ENCODE measurements at regions of chr13 and their contacts with region 1.

Region 1: DNA sequence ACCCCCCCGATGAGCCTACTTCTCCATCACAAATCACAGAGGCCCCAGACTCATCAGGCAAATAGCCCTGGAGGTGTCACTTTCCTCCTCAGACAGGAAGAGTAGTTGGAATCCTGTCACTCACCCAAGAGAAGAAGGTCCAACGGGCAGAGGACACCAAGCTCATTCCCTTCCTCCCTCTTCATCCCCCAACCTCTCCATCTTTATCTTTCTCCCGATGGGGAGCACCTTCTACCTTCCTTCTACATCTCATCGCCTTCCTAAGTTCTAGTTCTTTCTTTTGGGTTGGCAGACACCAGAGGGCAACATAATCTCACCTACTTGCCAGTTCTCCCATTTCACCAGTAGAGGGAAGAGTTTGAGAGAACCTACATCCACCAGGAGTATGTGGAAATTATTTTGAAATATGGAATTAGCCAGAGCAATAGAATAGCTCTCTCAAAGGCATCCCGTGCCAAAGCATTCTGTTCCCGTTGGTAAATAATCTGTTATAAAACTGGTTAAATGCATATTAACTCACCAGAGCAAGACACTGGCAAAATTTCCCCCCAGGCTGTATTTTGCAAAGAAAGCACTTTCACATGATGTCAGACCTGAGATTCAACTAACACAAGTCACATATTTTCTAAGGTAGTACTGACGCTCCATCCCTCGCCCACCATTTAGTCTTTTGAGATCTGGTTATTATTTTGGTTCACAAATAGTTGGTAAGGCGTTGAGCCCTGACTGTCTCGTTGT is 55.0 kb downstream of the ZIC5 start:
- DNase-seq: peak in 2 of 6 donors; percentile 33 to 49
- ATAC-seq: peak; percentile 86 to 99 (median 98)
- H3K4me3 ChIP-seq: no peak overlapping the region
- H3K27ac ChIP-seq: no peak overlapping the region
- H3K4me1 ChIP-seq: no peaks in the 10 kb centered on the region
- H3K27me3 ChIP-seq: no peaks in the 10 kb centered on the region
- CTCF ChIP-seq: peak; percentile 72 to 83 (median 76)

Region 2: GRCh38 chr13:100235311-100235901 is 318.9 kb after region 1 on chr13:
- intact Hi-C with region 1: loop called in 2 of 3 experiments (anchors 5 to 10 kb)
- DNase-seq: peak in 1 of 6 donors; percentile 31
- ATAC-seq: peak; percentile 66 to 84 (median 82)
- H3K4me3 ChIP-seq: peak overlapping the region in 1 of 4 donors; percentile 10
- H3K27ac ChIP-seq: no peak overlapping the region
- H3K4me1 ChIP-seq: peaks cover 0 to 7% (median 4%) of the 10 kb centered on the region in 3 donors
- H3K27me3 ChIP-seq: no peaks in the 10 kb centered on the region
- CTCF ChIP-seq: peak in 3 of 4 donors; percentile 12 to 39 (median 39)

Region 3: DNA sequence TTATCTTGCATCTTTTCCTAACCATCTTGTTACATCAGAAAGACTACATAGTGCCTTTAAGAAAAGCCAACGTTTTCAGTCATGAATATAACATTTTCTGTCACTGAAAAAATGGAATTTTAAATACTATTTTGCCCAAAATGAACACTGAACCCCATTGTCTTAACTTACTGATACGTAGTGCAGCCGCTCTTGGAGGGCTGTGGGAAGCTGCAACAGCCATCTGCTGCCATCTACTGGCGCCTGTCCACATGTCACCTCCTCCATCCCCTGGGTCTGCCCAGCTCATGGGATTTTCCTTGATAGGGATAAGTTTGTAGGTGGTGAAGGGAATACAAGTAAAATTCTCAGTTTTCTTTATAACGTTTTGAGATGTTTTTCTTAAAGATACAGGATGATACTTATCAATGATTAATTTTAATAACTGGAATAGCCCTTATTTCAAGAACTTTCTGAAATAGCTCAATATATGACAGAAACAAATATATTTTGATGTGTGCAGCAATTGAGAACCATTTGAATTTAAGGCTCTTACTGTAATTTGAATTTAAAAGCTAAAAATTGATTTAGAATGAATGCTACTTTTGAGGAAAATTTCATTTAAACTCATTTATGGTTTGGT is 598.4 kb after region 1 on chr13:
- intact Hi-C with region 1: loop called in 2 of 3 experiments (anchors 10 kb)
- DNase-seq: peak; percentile 61 to 86 (median 79)
- ATAC-seq: peak; percentile 69 to 87 (median 82)
- H3K4me3 ChIP-seq: no peak overlapping the region
- H3K27ac ChIP-seq: no peak overlapping the region
- H3K4me1 ChIP-seq: peaks cover 6 to 26% (median 23%) of the 10 kb centered on the region in 3 donors
- H3K27me3 ChIP-seq: no peaks in the 10 kb centered on the region
- CTCF ChIP-seq: peak; percentile 66 to 91 (median 82)